Activated B cell treated with CpG ODN at 0.5 μM for 24 hours (primary cell): ENCODE measurements at regions of chr17 and their contacts with region 1.

Region 1: DNA sequence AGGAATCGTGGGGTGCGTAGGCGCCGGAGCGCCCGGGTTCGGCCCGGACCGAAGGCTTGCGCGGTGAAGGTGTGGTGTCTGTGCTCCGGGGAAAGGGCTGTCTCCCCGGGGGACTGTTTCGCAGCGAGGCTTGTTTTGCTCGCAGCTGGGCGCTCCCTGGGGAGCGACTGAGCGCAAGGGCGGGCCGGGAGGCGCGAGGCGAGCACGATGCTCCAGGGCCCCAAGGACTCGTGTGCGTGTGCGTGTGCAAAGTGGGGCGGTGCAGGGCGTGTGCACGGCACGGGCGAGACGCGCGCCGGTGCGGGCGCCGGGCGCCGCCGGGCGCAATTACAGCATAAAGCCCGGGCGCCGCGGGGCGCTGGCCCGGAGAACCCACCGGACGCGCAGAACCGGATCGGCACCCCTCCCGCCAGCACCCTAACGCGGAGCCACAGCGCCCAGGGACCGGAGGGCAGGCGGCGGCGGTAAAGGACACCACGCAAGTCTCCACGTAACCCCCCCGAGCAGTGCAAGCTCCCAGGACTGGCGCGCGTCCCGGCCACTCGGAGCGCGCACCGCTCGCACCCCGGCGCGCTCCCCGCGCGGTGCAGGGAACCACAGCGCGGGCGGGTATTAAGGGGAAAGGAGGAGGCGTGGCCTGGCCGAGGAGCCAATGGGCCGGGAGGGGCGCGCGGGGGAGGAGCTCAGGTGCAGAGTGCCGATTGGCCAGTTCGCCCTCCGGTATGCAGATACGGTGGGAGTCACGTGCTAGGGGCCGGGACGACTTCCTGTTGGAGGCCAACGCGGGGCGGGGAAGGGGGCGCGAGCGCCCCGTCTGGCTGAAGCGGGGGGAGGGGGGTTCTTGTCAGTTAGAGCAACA is at the start of gene TNRC6C:
- DNase-seq: peak; percentile 98
- ATAC-seq: peak; percentile 85
- H3K4me3 Mint-ChIP-seq: peak within 1 kb of the TSS; percentile 89
- H3K27ac Mint-ChIP-seq: peak within 1 kb of the TSS; percentile 96
- H3K4me1 Mint-ChIP-seq: peaks cover 41% of the 10 kb centered on the region
- H3K27me3 Mint-ChIP-seq: peaks cover 15% of the 10 kb centered on the region
- CTCF ChIP-seq: no peak
- total RNA-seq, gene TNRC6C: 14.4 and 24.6 TPM in 2 replicates

Region 2: DNA sequence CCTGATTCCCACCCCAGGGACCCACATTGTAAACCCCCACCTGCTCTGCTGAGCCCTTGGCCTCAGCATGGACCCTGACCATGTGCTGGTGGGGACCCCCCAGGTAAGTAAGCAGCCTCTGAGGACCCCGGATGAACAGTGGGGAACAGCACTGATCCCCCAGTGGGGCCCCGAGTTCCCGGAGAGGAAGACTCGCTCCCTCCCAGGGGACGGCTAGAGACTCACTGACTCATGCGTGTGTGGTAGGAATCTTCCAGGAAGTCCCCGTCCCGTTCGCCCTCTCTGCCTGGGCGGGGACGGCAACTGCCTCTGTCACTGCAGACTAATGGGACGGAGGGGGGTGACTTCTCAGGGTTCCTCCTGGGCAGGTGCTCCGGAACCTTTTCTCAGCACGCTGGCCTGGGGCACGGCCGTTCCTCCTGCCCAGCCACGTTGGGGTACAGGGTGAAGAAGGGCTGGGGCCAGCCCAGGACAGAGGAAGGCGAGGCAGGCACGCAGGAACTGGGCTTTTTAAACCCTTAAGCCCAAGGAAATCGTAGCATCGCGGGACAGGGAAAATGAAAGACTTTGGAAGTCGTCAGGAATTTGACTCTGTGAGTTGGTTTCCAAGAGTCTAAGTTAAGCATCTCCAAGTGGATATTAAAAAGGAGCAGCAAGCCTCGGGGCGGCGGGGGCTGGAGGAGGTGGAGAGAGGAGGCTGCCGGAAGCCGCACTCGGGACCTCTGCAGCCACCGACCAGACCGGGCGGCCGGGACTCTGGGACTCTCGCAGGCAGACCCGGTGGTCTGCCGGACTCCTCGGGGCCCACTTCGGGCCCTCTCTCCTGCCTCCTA is 638.7 kb before region 1 on chr17:
- CTCF ChIA-PET with region 1: no interaction called
- POLR2A ChIA-PET with region 1: interaction called, 46 read pairs
- intact Hi-C with region 1: loop called (anchors 5 kb)
- DNase-seq: peak; percentile 68
- ATAC-seq: peak; percentile 41
- H3K4me3 Mint-ChIP-seq: peak overlapping the region; percentile 92
- H3K27ac Mint-ChIP-seq: peak overlapping the region; percentile 89
- H3K4me1 Mint-ChIP-seq: peaks cover 76% of the 10 kb centered on the region
- H3K27me3 Mint-ChIP-seq: no peaks in the 10 kb centered on the region
- CTCF ChIP-seq: no peak

Region 3: DNA sequence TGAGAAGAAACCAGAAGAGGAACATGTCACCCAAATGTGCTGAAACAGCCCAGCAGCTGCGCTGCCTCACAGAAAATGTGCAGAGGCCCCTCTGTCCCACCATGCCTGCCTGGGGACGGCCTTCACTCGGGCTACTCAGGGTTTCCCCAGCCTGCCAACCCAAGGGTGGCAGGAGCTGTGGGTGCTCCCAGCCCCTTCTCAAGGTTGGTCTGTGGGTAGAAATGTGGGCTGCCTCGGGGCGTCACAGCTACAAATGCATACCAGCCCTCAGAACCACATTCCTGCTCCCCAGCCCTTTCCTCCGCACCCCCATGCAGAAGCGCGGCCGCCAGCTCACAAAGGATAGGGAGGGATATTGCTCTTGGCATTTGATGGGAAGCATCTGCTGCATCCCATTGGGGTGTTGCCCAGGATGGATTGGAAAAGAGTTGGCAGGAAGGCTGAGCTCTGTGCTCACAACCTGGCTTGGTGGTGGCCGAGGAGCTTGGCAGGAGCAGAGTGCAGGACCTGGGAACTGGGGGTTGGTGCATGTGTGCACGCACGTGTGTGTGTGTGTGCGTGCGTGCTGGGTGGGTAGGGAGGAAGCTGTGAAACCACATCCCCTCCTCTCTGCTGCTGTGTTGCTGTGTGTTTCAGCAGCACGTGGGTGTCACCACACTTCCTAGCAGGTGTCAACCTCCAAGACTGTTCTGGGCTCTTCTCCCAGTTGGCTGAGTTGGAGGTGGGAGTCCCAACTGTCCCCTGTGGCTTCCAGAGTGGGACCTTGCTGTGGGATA is 512.9 kb before region 1 on chr17:
- CTCF ChIA-PET with region 1: no interaction called
- POLR2A ChIA-PET with region 1: interaction called, 16 read pairs
- intact Hi-C with region 1: loop called (anchors 5 kb)
- DNase-seq: peak; percentile 70
- ATAC-seq: peak; percentile 45
- H3K4me3 Mint-ChIP-seq: peak overlapping the region; percentile 80
- H3K27ac Mint-ChIP-seq: peak overlapping the region; percentile 94
- H3K4me1 Mint-ChIP-seq: peaks cover 96% of the 10 kb centered on the region
- H3K27me3 Mint-ChIP-seq: no peaks in the 10 kb centered on the region
- CTCF ChIP-seq: no peak

Region 4: DNA sequence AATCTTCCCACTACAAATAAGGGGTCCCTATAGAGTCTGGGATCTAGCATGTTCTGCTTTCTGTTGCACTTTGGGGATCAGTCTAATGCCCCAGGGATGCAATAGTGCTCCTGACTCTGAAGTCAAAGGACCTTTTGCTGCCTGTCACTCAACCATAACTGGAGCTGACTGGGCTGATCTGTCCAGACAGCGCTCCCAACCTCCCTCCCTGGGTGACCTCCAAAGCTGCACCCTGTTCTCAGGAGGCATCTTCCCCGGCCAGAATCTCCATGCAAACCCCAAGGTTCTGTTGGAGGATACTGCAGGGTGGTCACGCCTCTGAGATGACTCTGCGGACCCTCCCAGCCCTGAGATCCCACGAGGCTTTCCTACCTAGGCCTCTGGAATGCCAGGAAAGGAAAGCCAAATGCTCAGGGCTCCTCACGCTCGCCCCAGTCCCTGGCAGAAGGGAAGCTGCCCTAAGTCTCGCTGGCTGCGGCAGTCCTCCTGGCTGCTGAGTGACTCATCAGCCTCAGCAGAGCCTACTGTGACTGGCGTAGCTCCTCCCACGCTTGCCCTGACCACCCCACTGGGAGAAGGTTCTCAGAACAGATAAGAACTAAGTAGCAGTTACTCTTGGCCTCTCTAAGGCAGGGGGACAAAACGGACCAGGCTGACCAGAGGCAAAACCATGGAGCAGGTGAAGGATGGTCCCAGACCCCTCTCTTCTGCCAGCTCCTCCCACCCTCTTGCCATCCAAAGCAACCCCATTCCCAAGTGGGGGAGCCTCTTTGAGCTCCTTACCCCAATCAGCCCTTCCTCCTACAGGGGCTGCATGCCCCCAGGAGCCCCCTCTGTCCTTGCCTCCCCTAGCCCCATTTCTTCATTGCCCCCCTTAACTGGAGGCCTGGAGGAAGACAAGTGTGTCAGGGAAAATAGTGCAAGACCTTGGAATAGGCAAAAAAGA is 123.6 kb before region 1 on chr17:
- CTCF ChIA-PET with region 1: no interaction called
- POLR2A ChIA-PET with region 1: interaction called, 20 read pairs
- intact Hi-C with region 1: no loop called
- DNase-seq: peak; percentile 16
- ATAC-seq: peak; percentile 97
- H3K4me3 Mint-ChIP-seq: no peak overlapping the region
- H3K27ac Mint-ChIP-seq: no peak overlapping the region
- H3K4me1 Mint-ChIP-seq: peaks cover 17% of the 10 kb centered on the region
- H3K27me3 Mint-ChIP-seq: peaks cover 49% of the 10 kb centered on the region
- CTCF ChIP-seq: no peak

Region 5: GRCh38 chr17:77899498-77899897 is 58.6 kb before region 1 on chr17:
- CTCF ChIA-PET with region 1: no interaction called
- POLR2A ChIA-PET with region 1: interaction called, 12 read pairs
- intact Hi-C with region 1: no loop called
- DNase-seq: no peak
- ATAC-seq: no peak
- H3K4me3 Mint-ChIP-seq: no peak overlapping the region
- H3K27ac Mint-ChIP-seq: no peak overlapping the region
- H3K4me1 Mint-ChIP-seq: peaks cover 12% of the 10 kb centered on the region
- H3K27me3 Mint-ChIP-seq: peaks cover 37% of the 10 kb centered on the region
- CTCF ChIP-seq: no peak

Region 6: DNA sequence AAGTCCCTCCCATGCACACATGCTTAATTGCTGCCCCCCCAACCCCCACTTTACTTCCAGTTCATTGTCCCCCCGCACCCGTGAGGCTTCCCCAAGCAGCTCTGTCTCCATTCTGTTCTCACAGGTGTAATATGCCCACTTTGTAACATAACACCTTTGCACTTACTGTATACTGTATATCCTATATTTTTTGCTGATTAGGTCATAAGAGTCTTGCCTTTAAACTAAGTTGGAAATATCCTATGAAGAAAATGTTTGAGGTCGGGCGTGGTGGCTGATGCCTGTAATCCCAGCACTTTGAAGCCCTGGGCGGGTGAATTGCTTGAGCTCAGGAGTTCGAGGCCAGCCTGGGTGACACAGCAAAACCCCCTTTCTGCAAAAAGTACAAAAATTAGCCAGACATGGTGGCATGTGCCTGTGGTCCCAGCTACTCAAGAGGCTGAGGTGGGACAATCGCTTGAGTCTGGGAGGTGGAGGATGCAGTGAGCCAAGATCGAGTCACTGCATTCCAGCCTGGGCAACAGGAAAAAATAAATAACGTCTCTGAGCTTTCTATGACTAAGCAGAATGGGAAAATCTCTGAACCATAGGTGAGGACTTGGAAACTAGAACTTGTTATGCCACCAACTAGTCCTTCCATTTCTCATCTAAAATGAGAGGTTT is 76.5 kb after region 1 on chr17:
- CTCF ChIA-PET with region 1: no interaction called
- POLR2A ChIA-PET with region 1: no interaction called
- intact Hi-C with region 1: no loop called
- DNase-seq: no peak
- ATAC-seq: no peak
- H3K4me3 Mint-ChIP-seq: no peak overlapping the region
- H3K27ac Mint-ChIP-seq: no peak overlapping the region
- H3K4me1 Mint-ChIP-seq: no peaks in the 10 kb centered on the region
- H3K27me3 Mint-ChIP-seq: no peaks in the 10 kb centered on the region
- CTCF ChIP-seq: no peak

Region 7: GRCh38 chr17:78058001-78058400 is 99.9 kb after region 1 on chr17:
- CTCF ChIA-PET with region 1: no interaction called
- POLR2A ChIA-PET with region 1: no interaction called
- intact Hi-C with region 1: no loop called
- DNase-seq: no peak
- ATAC-seq: no peak
- H3K4me3 Mint-ChIP-seq: no peak overlapping the region
- H3K27ac Mint-ChIP-seq: no peak overlapping the region
- H3K4me1 Mint-ChIP-seq: no peaks in the 10 kb centered on the region
- H3K27me3 Mint-ChIP-seq: no peaks in the 10 kb centered on the region
- CTCF ChIP-seq: no peak

Region 8: DNA sequence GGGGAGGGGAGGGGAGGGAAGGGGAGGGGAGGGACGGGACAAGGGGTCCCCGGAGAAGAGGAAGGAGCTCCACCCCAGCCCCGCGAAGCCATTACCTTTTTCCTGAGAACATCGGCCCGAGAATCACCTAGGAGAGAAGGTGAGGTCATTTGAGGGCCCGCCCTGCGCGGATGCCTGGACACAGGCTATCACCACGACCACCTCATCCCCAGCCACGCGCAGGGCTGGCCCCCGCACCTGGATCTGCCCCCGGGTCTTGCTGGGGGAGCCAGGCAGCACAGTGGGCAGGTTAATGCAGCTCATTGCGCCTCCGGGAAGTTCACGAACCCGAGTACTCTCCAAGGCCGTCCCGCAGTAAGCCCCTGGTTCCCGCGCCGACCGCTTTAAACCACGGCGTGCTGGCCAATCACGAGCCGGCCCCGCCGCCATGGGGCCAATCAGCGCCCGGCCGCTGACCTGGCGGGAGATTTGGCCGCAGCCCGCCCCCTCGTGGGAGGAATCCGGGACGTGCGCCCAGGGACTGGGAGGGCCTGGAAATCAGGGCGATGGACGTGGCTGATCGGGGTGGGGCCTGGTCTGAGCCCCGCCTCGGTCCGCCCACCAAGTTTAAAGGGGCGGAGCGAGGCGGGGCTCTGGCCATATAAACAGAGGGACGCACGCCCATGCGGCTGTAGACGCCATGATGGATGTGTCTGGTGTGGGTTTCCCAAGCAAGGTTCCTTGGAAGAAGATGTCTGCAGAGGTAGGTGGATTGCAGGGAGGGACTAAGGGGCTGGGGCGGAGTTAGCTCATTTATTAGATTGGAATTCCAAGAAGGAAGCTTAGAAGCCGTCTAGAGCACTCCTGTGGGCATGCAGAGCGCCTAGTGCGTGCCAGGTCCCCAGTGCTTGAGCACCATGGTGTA is 228.9 kb after region 1 on chr17 and contains the starts of genes AFMID and TK1:
- CTCF ChIA-PET with region 1: no interaction called
- POLR2A ChIA-PET with region 1: no interaction called
- intact Hi-C with region 1: no loop called
- DNase-seq: peak; percentile 83
- ATAC-seq: peak; percentile 96
- H3K4me3 Mint-ChIP-seq: peak within 1 kb of the TSS; percentile 85
- H3K27ac Mint-ChIP-seq: peak within 1 kb of the TSS; percentile 54
- H3K4me1 Mint-ChIP-seq: peaks cover 18% of the 10 kb centered on the region
- H3K27me3 Mint-ChIP-seq: no peaks in the 10 kb centered on the region
- CTCF ChIP-seq: no peak
- total RNA-seq, gene AFMID: 11.2 and 15.4 TPM in 2 replicates
- total RNA-seq, gene TK1: 3.8 TPM in 2 replicates

Region 9: GRCh38 chr17:78736526-78737079 is 778.5 kb after region 1 on chr17:
- CTCF ChIA-PET with region 1: no interaction called
- POLR2A ChIA-PET with region 1: interaction called, 10 read pairs
- intact Hi-C with region 1: no loop called
- DNase-seq: peak; percentile 57
- ATAC-seq: peak; percentile 51
- H3K4me3 Mint-ChIP-seq: peak overlapping the region; percentile 92
- H3K27ac Mint-ChIP-seq: peak overlapping the region; percentile 90
- H3K4me1 Mint-ChIP-seq: peaks cover 81% of the 10 kb centered on the region
- H3K27me3 Mint-ChIP-seq: no peaks in the 10 kb centered on the region
- CTCF ChIP-seq: no peak